Activated CD4-positive, alpha-beta T cell treated with anti-CD3 and anti-CD28 coated beads for 36 hours (primary cell): ENCODE measurements at regions of chr9 and their contacts with region 1.

Region 1: GRCh38 chr9:19174127-19174912 is 47.0 kb upstream of the PLIN2 start:
- DNase-seq: peak; percentile 75
- ATAC-seq: peak; percentile 98
- H3K4me3 Mint-ChIP-seq: peak overlapping the region; percentile 5
- H3K27ac Mint-ChIP-seq: peak overlapping the region; percentile 40
- H3K4me1 Mint-ChIP-seq: peaks cover 29% of the 10 kb centered on the region
- H3K27me3 Mint-ChIP-seq: no peaks in the 10 kb centered on the region

Region 2: DNA sequence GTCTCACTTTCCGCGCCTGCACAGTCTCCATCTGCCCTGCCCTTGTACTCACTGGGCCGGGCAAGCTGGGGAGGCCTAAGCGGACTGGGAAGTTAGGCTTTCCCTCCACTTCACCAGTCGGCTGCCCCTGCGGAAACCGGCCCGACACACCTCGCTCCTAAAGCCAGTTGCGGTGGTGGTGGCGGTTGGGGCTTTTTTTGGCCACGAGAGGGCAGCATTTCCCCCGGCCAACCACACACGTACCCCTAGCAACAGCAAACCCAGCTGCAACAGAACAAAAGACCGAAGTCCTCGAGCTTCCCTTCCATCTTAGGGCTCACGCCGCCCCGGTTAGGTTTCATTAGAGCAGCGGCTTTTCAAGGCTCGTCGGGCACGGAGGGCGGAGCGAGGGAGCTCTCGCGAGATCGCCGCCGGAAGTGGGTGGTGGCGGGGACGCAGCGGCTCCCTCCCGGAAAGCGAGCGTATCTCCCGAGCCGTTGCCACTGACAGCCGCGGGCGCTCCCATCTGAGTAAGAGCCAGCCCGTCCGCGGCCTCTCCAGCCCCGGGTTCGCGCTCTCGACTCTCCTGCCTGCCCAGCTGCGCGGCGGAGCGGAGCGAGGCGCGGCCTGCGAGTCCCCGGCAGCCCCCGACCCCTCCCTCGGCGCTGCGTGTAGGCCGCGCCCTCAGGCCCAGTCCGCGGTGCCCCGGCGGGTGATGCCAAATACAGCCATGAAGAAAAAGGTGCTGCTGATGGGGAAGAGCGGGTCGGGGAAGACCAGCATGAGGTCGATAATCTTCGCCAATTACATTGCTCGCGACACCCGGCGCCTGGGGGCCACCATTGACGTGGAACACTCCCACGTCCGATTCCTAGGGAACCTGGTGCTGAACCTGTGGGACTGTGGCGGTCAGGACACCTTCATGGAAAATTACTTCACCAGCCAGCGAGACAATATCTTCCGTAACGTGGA is 125.1 kb before region 1 on chr9 and contains the start of gene RRAGA:
- CTCF ChIA-PET with region 1: interaction called, 27 read pairs
- POLR2A ChIA-PET with region 1: interaction called, 8 read pairs
- intact Hi-C with region 1: loop called (anchors 1 to 2 kb)
- DNase-seq: peak; percentile 97
- ATAC-seq: peak; percentile 89
- H3K4me3 Mint-ChIP-seq: peak within 1 kb of the TSS; percentile 95
- H3K27ac Mint-ChIP-seq: peak within 1 kb of the TSS; percentile 96
- H3K4me1 Mint-ChIP-seq: peaks cover 26% of the 10 kb centered on the region
- H3K27me3 Mint-ChIP-seq: no peaks in the 10 kb centered on the region
- total RNA-seq, gene RRAGA: 42.4 to 53.4 TPM

Region 3: DNA sequence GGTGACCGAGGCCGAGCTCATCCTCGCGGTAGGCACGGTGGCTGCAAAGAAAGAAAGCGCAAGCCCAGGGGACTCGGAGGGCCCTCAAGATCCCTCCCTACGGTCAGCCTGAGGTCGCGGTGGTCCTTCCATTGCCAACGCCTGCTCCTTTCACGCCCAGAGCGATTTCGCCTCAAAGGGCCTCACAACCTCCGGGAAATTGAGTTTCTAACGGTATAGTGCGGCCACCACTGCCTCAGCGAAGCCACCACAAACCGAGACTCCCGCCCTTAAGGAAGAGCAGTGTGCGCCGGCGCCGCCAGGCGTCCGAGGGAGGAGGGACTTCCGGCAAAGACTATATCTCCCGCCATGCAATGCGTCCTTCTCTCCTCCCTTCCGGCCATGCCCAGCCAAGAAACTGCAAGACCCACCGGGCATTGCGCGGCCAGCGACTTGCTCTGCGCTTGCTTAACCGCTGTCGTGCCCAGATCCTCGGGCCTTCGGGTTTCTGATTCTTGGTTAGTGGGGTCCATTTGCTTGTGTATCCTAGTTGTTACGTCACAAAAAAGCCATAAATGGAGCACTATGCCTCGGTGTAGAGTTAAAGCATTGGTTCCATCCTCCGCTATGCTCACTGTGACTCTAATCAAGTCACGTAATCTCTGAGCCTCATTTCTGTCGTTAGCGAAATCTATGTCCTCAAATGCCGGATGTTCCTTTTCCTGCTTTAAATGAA is 71.5 kb before region 1 on chr9 and contains the start of gene HAUS6:
- CTCF ChIA-PET with region 1: interaction called, 4 read pairs
- POLR2A ChIA-PET with region 1: interaction called, 4 read pairs
- intact Hi-C with region 1: loop called (anchors 1 to 2 kb)
- DNase-seq: peak; percentile 98
- ATAC-seq: peak; percentile 98
- H3K4me3 Mint-ChIP-seq: peak within 1 kb of the TSS; percentile 96
- H3K27ac Mint-ChIP-seq: peak within 1 kb of the TSS; percentile 96
- H3K4me1 Mint-ChIP-seq: peaks cover 25% of the 10 kb centered on the region
- H3K27me3 Mint-ChIP-seq: no peaks in the 10 kb centered on the region
- total RNA-seq, gene HAUS6: 29.3 to 32.5 TPM

Region 4: DNA sequence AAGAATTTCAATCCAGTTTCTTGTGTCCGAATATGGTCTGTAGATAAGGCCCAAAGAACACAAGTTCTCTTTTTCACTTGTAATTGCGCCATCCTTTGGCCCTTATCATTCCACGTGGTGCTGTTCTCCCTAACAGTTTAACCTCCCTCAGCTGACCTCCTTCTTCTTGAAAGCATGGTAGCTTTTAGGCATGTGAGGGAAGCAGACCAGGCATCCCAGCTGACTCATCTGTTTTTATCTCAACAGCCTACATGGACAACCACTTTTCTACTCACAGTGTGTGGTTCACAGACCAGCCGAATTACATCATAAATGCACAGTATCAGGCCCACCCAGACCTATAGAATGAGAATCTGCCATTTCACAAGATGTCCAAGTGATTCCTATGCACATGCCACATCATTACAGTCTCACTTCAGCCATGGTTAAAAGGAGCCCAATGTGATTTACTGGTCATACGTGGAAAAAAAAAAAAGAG is 20.1 kb before region 1 on chr9:
- CTCF ChIA-PET with region 1: interaction called, 9 read pairs
- POLR2A ChIA-PET with region 1: interaction called, 8 read pairs
- intact Hi-C with region 1: loop called in 1 of 2 experiments (anchors 2 kb)
- DNase-seq: no peak
- ATAC-seq: peak; percentile 25
- H3K4me3 Mint-ChIP-seq: peak overlapping the region; percentile 2
- H3K27ac Mint-ChIP-seq: peak overlapping the region; percentile 78
- H3K4me1 Mint-ChIP-seq: peaks cover 36% of the 10 kb centered on the region
- H3K27me3 Mint-ChIP-seq: no peaks in the 10 kb centered on the region

Region 5: DNA sequence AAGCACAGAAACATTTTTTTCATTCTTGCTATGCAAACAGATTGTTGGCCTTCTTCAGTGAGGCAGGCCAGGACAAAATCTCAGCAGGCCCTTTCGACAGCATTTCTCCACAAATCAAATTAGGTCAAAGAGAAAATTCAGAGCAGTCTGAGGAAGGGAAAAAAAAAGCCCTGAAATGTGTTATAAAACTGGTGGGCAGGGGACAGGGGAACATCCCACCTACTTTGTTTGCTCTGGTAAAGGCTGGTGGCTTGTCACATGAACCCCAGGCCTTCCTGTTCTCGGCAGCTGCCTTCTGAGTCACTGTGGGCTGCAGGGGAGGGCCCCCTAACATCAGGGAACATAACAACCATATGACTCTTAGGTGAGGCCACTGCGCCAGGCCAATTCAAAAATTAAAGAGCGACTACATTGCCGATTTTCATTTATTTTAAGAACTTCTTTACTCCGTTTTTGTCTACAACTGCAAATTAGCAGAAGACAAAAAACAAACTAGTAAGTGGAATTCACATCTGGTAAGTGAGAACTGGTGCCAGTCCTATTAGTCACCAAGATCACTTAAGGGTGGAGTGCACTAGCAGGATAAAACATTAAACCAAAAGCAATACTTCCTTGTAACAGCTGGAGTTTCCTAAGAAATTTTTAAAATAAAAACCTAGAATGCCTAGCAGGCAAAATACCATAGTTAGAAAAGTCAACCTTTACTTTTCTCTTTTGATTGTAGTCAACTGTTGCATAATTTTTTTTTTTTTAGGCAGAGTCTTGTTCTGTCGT is 10.0 kb after region 1 on chr9:
- CTCF ChIA-PET with region 1: interaction called, 14 read pairs
- POLR2A ChIA-PET with region 1: interaction called, 4 read pairs
- intact Hi-C with region 1: no loop called
- DNase-seq: peak; percentile 91
- ATAC-seq: peak; percentile 99
- H3K4me3 Mint-ChIP-seq: peak overlapping the region; percentile 56
- H3K27ac Mint-ChIP-seq: peak overlapping the region; percentile 91
- H3K4me1 Mint-ChIP-seq: peaks cover 21% of the 10 kb centered on the region
- H3K27me3 Mint-ChIP-seq: no peaks in the 10 kb centered on the region

Region 6: DNA sequence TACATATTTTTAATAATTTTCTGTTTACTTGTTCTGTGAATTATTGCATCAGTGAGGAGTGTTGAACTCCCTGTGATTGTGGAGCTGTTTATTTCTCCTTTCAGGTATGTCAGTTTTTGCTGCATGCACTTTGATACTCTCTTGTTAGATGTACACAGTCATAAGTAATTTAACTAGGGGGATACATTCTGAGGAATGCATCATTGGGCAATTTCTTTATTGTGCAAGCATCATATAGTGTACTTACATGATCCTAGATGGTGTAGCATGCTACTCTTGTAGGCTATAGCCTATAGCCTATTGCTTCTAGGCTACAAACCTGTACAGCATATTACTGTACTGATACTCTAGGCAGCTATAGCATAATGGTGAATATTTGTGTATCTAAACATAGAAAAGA is 65.6 kb after region 1 on chr9:
- CTCF ChIA-PET with region 1: no interaction called
- POLR2A ChIA-PET with region 1: no interaction called
- intact Hi-C with region 1: no loop called
- DNase-seq: no peak
- ATAC-seq: no peak
- H3K4me3 Mint-ChIP-seq: no peak overlapping the region
- H3K27ac Mint-ChIP-seq: no peak overlapping the region
- H3K4me1 Mint-ChIP-seq: peaks cover 29% of the 10 kb centered on the region
- H3K27me3 Mint-ChIP-seq: no peaks in the 10 kb centered on the region

Region 7: GRCh38 chr9:19255821-19256220 is 81.5 kb after region 1 on chr9:
- CTCF ChIA-PET with region 1: no interaction called
- POLR2A ChIA-PET with region 1: no interaction called
- intact Hi-C with region 1: no loop called
- DNase-seq: no peak
- ATAC-seq: no peak
- H3K4me3 Mint-ChIP-seq: no peak overlapping the region
- H3K27ac Mint-ChIP-seq: no peak overlapping the region
- H3K4me1 Mint-ChIP-seq: peaks cover 39% of the 10 kb centered on the region
- H3K27me3 Mint-ChIP-seq: no peaks in the 10 kb centered on the region

Region 8: DNA sequence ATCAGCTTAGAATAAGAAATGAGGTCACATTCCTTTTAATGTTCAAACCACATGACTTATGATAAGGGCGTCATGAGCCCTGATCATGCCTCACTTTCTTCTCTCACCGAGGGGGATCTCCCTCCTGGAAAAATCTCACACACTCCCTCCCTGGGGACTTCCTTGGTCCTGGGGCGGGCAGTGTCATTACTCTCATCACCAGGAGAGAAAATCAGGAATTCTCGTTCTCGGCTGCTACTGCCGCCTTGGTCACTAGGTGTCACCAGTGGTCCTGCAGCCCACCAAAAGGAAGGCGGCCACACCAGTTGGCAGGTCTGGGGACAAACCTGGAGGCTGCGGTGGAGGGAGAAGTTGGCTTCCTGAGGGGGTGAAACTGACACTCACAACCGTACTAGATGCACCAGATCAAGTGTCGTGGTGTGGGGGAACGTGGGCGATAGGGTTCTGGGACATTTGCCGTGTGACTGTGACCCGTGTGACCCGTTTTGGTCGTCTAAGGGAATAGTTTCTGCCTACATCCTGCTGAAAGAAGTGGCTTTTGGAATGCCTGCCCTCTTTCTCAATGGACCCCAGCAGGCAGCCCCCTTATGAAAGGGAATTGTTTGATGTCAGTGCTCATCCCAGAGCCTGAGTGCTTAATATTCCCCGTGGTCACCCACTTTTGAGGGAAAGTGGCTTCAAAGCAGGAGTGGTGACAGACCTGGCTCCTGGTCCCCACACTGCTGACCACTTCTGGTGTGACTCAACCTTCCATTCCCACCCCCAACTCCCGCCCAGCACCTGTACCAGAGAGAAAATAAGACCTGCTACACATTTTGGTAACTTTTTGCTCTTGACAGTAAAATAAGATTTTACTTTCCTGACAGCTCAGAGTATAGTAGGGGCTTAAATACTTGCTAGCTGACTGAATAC is 297.7 kb after region 1 on chr9:
- CTCF ChIA-PET with region 1: no interaction called
- POLR2A ChIA-PET with region 1: no interaction called
- intact Hi-C with region 1: no loop called
- DNase-seq: peak; percentile 77
- ATAC-seq: peak; percentile 88
- H3K4me3 Mint-ChIP-seq: no peak overlapping the region
- H3K27ac Mint-ChIP-seq: peak overlapping the region; percentile 19
- H3K4me1 Mint-ChIP-seq: peaks cover 13% of the 10 kb centered on the region
- H3K27me3 Mint-ChIP-seq: no peaks in the 10 kb centered on the region